Activated T-helper 2 cell treated with anti-CD3 and anti-CD28 coated beads, Interferon-gamma antibody, Interleukin-2, Interleukin-4, amounts not matched to agents 10 μg/mL and 5 μg/mL and 100 μg/mL, durations not matched to agents 14 hours and 24 hours and 36 hours (primary cell): ENCODE measurements at regions of chr9 and their contacts with region 1.

Region 1: DNA sequence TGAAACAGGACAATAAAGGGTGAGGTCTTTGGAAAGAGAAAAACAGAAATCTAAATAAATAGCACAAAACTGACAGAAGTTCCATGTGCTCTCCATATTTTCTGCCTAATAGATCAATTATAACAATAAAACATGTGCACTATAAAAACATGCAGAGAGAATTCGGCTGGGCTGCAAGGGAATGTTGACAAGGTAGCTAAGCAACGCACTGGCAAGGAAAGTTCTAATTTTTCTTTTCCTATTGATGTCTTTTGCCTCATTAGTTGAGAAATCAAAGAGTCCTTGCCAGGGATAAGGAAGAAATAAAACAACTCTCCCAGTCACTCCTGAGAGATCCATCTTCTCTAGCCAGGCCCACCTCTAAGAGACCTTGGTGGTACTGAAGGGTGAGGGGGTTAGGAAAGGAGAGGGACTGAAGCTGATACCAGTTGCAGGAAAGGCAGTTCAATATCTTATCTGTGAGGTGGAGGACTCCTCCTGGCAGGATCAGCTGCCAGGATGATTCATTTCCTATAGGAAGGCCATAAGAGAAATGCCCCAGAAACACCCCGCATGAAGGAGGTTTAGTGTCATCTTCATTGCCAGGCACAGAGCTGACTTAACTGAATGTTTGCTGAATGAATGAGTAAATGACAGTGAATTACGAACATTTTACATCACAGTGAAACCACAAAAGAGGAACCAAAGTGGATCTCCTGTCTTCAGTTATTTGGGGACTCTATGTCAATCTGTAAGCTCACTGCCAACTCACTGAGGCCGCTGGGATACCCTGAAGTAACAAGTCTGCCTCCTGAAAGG is 63.7 kb upstream of the IFNK start:
- DNase-seq: no peak
- H3K4me3 Mint-ChIP-seq: no peak overlapping the region
- H3K27ac Mint-ChIP-seq: no peak overlapping the region
- H3K4me1 Mint-ChIP-seq: no peaks in the 10 kb centered on the region
- H3K27me3 Mint-ChIP-seq: no peaks in the 10 kb centered on the region

Region 2: DNA sequence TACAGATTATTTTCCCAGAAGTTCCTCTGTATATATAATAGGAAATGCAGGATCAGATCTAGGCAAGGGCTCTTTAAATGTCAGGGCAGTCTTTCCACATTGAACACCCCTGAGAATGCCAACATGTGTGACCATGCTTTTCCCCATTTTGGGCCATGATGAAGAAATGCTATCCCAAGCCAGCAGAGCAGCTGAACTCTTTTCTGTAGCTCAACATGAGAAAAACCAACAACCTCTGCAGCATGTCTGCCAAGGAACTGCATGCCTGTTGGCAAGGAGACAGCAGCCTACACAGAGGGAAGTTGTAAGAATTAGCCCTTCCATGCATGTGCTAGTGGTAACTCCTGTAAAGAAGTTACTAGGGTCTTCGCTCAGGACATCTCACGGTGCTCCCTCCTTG is 54.1 kb after region 1 on chr9:
- intact Hi-C with region 1: loop called (anchors 5 kb)
- DNase-seq: no peak
- H3K4me3 Mint-ChIP-seq: no peak overlapping the region
- H3K27ac Mint-ChIP-seq: no peak overlapping the region
- H3K4me1 Mint-ChIP-seq: no peaks in the 10 kb centered on the region
- H3K27me3 Mint-ChIP-seq: peaks cover 1% of the 10 kb centered on the region